ENCODE measurements at regions of chr4 and their contacts with region 1.

Region 1: DNA sequence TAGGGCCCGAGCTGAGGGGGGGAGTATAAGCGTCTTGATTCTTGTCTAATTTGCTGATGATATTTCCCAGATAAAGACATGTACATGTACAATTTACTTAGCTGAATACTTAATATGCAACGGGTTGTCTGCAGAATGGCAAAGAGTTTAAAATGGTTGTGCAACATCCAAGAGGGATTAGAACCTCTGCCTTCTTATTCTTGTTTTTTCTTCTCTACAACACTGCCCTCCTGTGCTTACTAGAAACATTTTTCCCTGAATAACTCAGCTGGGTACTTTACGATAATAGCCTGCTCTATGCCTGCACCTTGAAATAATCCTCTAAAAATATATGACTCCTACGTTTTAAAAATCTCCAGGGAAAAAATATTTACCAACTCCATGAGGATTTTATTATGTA is 41.8 kb downstream of the INTS12 start:
- DNase-seq: peak; percentile 80
- H3K4me3 ChIP-seq: no peak overlapping the region
- H3K27ac ChIP-seq: no peak overlapping the region
- H3K4me1 ChIP-seq: no peaks in the 10 kb centered on the region
- H3K27me3 ChIP-seq: no peaks in the 10 kb centered on the region
- CTCF ChIP-seq: peak; percentile 61

Region 2: DNA sequence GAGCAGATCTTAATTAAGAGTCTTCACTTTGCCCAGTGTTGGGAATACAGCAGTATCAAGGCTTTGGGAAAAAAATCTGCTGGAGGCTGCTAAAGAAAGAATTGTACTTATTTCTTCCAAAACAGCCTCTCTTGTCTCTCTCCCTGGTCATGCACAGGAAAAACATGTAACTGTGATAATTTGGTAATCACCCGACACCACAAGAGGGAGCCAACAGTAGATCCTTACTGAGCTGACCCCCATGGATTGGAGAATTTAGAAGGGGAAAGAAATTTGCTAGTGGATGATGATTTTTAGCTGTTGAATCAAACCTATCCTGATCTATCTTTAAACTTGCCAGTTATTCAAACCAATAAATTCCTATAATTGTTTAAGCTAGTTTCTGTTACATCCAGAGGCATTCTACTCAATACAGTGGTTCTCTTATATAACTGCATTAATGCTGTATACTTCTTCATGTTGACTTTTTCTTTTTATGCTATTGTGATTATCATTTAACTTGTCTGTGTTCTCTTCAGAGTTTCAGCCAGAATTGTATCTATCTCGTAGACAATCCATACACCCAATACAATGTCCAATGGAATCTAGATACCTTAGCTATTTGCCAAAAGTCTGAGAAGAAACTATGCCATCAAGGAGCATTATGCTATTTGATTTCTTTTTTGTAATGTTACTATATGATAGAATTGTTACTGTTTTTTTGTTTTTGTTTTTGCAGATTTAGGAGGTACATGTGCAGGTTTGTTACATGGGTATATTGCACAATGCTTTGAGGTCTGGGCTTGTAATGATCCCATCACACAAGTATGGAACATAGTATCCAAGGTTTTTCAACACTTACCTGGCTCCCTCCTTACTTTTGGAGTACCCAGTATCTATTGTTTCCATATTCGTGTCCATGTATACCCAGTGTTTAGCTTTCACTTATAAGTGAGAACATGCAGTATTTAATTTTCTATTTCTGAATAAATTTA is 145.6 kb before region 1 on chr4:
- CTCF ChIA-PET with region 1: interaction called, 20 read pairs
- POLR2A ChIA-PET with region 1: no interaction called
- intact Hi-C with region 1: loop called (anchors 1 kb)
- DNase-seq: peak; percentile 75
- H3K4me3 ChIP-seq: no peak overlapping the region
- H3K27ac ChIP-seq: no peak overlapping the region
- H3K4me1 ChIP-seq: no peaks in the 10 kb centered on the region
- H3K27me3 ChIP-seq: no peaks in the 10 kb centered on the region
- CTCF ChIP-seq: peak; percentile 77

Region 3: GRCh38 chr4:106010761-106011160 is 344.1 kb after region 1 on chr4:
- CTCF ChIA-PET with region 1: no interaction called
- POLR2A ChIA-PET with region 1: no interaction called
- intact Hi-C with region 1: no loop called
- DNase-seq: no peak
- H3K4me3 ChIP-seq: no peak overlapping the region
- H3K27ac ChIP-seq: no peak overlapping the region
- H3K4me1 ChIP-seq: no peaks in the 10 kb centered on the region
- H3K27me3 ChIP-seq: no peaks in the 10 kb centered on the region
- CTCF ChIP-seq: no peak